Right ventricle myocardium inferior (tissue), 1 donor: ENCODE measurements at regions of chr5 and their contacts with region 1.

Region 1: GRCh38 chr5:71492817-71493615 is 37.6 kb downstream of the BDP1 start:
- DNase-seq: no peak
- ATAC-seq: no peak

Region 2: GRCh38 chr5:72895758-72896157 is 1402.7 kb after region 1 on chr5:
- intact Hi-C with region 1: loop called (anchors 10 kb)
- DNase-seq: no peak
- ATAC-seq: no peak